ENCODE measurements at regions of chr6 and their contacts with region 1.

Region 1: GRCh38 chr6:127146932-127147331 is 28.5 kb downstream of the RSPO3 start:
- DNase-seq: peak; percentile 90
- H3K4me3 ChIP-seq: peak overlapping the region in 1 of 3 experiments; percentile 15
- H3K27ac ChIP-seq: peak overlapping the region; percentile 46
- H3K4me1 ChIP-seq: peaks cover 21% of the 10 kb centered on the region
- H3K27me3 ChIP-seq: no peaks in the 10 kb centered on the region
- CTCF ChIP-seq: no peak
- POLR2A ChIP-seq: peak; percentile 37

Region 2: GRCh38 chr6:126293891-126294524 is 852.9 kb before region 1 on chr6:
- CTCF ChIA-PET with region 1: no interaction called
- POLR2A ChIA-PET with region 1: no interaction called
- dilution Hi-C with region 1: no loop called
- intact Hi-C with region 1: no loop called
- DNase-seq: no peak
- H3K4me3 ChIP-seq: no peak overlapping the region
- H3K27ac ChIP-seq: no peak overlapping the region
- H3K4me1 ChIP-seq: no peaks in the 10 kb centered on the region
- H3K27me3 ChIP-seq: peaks cover 0 to 2% of the 10 kb centered on the region in 2 experiments
- CTCF ChIP-seq: no peak
- POLR2A ChIP-seq: no peak

Region 3: DNA sequence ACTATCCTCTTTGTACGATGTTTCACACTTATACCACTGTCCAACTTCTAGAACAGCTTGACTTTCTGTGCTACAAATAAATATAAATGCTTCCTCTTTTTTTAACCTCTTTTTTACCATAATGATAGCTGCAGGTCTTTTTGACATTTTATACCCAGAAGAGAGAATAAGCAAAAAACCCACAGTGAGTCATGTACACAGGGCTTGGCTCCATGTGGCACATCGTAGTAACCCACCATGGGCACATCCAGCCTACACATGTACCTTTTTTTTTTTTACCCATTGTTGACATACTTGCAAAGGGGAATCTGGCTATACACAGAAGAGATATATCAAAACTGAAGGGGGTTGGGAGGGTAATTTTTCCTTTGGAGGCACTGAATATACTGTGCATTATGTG is 88.0 kb before region 1 on chr6:
- CTCF ChIA-PET with region 1: no interaction called
- POLR2A ChIA-PET with region 1: no interaction called
- dilution Hi-C with region 1: no loop called
- intact Hi-C with region 1: no loop called
- DNase-seq: no peak
- H3K4me3 ChIP-seq: no peak overlapping the region
- H3K27ac ChIP-seq: no peak overlapping the region
- H3K4me1 ChIP-seq: peaks cover 14% of the 10 kb centered on the region
- H3K27me3 ChIP-seq: no peaks in the 10 kb centered on the region
- CTCF ChIP-seq: no peak
- POLR2A ChIP-seq: no peak

Region 4: GRCh38 chr6:127092466-127092865 is 54.5 kb before region 1 on chr6:
- CTCF ChIA-PET with region 1: no interaction called
- POLR2A ChIA-PET with region 1: no interaction called
- dilution Hi-C with region 1: no loop called
- intact Hi-C with region 1: no loop called
- DNase-seq: no peak
- H3K4me3 ChIP-seq: no peak overlapping the region
- H3K27ac ChIP-seq: no peak overlapping the region
- H3K4me1 ChIP-seq: no peaks in the 10 kb centered on the region
- H3K27me3 ChIP-seq: no peaks in the 10 kb centered on the region
- CTCF ChIP-seq: no peak
- POLR2A ChIP-seq: no peak

Region 5: GRCh38 chr6:127131275-127131674 is 15.7 kb before region 1 on chr6:
- CTCF ChIA-PET with region 1: interaction called, 8 read pairs
- POLR2A ChIA-PET with region 1: interaction called, 3 read pairs
- dilution Hi-C with region 1: no loop called
- intact Hi-C with region 1: loop called (anchors 1 kb)
- DNase-seq: peak; percentile 55
- H3K4me3 ChIP-seq: no peak overlapping the region
- H3K27ac ChIP-seq: no peak overlapping the region
- H3K4me1 ChIP-seq: peaks cover 16% of the 10 kb centered on the region
- H3K27me3 ChIP-seq: no peaks in the 10 kb centered on the region
- CTCF ChIP-seq: no peak
- POLR2A ChIP-seq: no peak

Region 6: GRCh38 chr6:127162836-127163235 is 15.9 kb after region 1 on chr6:
- CTCF ChIA-PET with region 1: interaction called, 3 read pairs
- POLR2A ChIA-PET with region 1: no interaction called
- dilution Hi-C with region 1: no loop called
- intact Hi-C with region 1: loop called (anchors 1 kb)
- DNase-seq: peak; percentile 76
- H3K4me3 ChIP-seq: no peak overlapping the region
- H3K27ac ChIP-seq: no peak overlapping the region
- H3K4me1 ChIP-seq: peaks cover 16% of the 10 kb centered on the region
- H3K27me3 ChIP-seq: no peaks in the 10 kb centered on the region
- CTCF ChIP-seq: no peak
- POLR2A ChIP-seq: no peak

Region 7: DNA sequence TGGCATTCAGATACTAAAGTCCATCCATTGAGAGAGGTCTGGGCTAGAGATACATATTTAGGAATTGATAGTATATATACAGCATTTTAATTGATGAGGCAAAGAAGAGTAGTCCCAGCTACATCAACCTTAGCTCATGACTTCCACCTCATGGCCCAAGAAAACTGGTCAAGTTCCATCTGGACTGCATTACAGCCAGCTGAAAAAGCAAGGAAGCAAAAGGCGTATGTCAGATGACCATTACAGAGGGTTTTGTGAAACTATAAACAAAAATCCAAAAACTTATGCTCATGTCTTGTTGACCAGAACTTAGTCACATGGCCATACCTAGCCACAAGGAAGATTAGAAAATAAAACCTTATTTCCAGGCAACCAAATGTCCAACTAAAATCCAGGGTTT is 72.9 kb after region 1 on chr6:
- CTCF ChIA-PET with region 1: no interaction called
- POLR2A ChIA-PET with region 1: no interaction called
- dilution Hi-C with region 1: no loop called
- intact Hi-C with region 1: no loop called
- DNase-seq: no peak
- H3K4me3 ChIP-seq: no peak overlapping the region
- H3K27ac ChIP-seq: no peak overlapping the region
- H3K4me1 ChIP-seq: peaks cover 14% of the 10 kb centered on the region
- H3K27me3 ChIP-seq: peaks cover 0 to 2% of the 10 kb centered on the region in 2 experiments
- CTCF ChIP-seq: no peak
- POLR2A ChIP-seq: no peak

Measured in endothelial cell of umbilical vein (primary cell).